BJ (cell line): ENCODE measurements at regions of chr1 and their contacts with region 1.

Region 1: GRCh38 chr1:110460253-110461220 is 9.6 kb downstream of the PROK1 start:
- DNase-seq: peak; percentile 23
- H3K4me3 ChIP-seq: no peak overlapping the region
- H3K27me3 ChIP-seq: no peaks in the 10 kb centered on the region; the same call in 1 of the 2 replicates
- CTCF ChIP-seq: peak; percentile 92

Region 2: DNA sequence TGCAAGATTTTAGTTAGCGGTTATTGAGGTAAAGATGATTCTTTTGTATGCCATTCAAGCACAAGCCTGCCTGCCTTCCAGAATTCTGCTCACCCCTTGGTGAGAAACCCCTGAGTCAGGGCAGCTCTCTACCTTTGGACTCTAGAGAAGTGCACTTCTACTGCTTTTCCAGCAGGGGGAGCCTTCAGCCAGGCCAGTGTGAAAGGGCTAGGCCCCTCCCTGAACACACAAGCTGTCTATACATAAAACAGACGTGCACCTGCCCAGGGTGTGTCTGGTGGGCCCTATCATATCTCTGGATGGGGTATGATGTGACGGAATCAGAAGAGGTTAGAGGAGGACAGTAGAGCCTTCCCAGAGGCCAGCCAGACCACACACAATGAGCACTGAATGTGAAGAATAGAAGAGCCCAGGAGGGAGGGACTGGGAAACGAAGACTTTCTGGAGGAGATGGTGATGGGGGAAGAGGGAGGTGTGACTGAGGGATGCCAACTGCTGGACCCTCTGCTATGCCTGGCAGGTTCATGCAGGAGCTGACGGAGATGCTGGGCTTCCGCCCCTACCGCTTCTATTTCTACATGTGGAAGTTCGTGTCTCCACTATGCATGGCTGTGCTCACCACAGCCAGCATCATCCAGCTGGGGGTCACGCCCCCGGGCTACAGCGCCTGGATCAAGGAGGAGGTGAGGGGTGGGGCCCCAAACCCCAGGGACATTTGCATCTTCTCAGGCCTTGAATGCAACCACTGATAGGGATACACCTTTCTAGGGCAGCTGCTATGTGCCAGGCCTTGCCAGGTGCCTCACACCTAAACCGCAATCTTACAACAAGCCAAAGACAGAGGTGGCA is 263.4 kb before region 1 on chr1:
- CTCF ChIA-PET with region 1: interaction called, 331 read pairs
- POLR2A ChIA-PET with region 1: no interaction called
- DNase-seq: no peak
- H3K4me3 ChIP-seq: no peak overlapping the region
- H3K27me3 ChIP-seq: no peaks in the 10 kb centered on the region
- CTCF ChIP-seq: peak; percentile 98

Region 3: GRCh38 chr1:110319332-110320152 is 141.0 kb before region 1 on chr1:
- CTCF ChIA-PET with region 1: interaction called, 21 read pairs
- POLR2A ChIA-PET with region 1: no interaction called
- DNase-seq: no peak
- H3K4me3 ChIP-seq: no peak overlapping the region
- H3K27me3 ChIP-seq: no peaks in the 10 kb centered on the region
- CTCF ChIP-seq: no peak

Region 4: DNA sequence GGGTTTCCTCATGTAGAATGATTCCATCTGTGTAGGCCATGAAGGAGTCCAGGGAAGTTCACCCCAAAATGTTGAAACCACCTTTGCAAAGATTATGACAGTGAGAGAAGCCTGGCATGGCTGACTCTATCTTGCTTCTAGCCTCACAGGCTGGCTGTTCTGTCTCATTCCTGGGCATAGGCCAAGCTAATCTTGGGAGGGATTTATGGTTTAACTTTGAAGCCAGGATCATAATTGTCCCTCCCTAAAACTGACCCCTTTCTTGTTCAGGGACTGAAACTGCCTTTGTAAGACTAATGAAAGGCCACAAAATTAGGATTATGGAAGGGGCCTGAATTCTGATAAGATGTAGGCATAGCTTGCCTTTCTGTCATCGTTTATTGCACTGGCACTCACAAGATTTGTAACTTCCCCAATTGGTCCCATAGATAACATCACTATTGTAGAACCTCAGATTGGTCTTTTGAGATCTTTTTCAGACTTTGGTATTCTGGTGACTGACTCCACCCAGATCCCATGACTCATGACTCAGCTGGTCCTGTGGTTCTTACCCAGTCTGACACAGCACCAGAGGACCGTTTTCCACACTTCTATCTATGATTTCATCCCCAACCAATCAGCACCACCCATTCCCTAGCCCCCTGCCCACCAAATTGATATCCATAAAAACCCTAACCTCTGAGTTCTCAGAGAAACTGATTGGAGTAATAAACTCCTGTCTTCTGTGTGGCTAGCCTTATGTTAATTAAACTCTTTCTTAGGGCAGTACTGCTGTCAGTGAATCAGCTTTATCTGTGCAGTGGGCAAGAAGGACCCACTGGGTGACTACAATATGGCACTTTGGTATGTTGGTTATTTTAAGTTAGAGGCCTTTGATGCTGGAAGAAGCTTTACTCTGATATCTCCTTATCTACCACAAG is 39.4 kb before region 1 on chr1:
- CTCF ChIA-PET with region 1: interaction called, 296 read pairs
- POLR2A ChIA-PET with region 1: no interaction called
- DNase-seq: no peak
- H3K4me3 ChIP-seq: no peak overlapping the region
- H3K27me3 ChIP-seq: peaks cover 4% of the 10 kb centered on the region
- CTCF ChIP-seq: no peak

Region 5: DNA sequence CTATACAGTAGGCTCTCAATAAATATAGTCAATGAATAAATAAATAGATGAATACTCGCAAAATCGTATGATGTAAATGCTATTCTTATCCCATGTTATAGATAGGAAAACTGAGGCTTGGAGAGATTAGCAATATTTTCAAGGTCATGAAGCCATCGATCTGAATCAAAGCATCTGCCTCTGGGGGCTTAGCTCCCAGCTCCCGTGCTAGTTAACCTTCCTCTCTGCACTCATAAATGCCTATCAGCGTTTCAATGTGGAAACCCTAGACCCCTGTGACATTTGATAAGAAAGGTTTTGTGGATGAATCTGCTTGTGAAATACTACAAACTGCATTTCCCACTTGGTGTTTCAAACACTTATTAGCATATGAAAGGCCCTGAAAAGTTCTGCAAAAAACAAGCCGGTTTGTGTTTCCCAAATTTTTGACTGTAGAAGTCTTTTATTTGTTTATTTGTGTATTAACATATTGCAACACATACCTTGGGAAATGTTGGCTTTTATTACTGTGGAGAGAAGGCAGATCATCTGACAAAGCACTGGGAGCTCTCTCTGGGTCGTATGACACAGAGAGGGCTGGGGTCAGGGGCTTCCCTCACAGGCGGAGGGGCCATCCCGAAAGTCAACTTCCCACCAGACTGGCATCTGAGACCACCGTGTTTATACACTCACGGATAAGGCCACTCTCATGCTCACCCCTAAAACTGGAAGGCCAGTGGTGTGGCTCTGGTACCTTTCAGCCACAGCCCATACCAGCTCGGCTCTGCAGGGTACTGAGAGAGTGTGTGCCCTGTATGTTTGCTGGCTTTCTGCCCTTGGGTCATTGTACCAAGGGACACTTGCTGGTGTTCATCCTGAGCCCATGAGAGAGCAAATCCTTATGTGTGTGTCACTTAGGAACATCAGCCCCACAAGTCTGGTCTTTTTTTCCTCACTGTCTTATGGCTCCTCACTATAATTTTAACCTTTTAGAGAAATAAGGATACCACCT is 10.6 kb before region 1 on chr1:
- CTCF ChIA-PET with region 1: interaction called, 17 read pairs
- POLR2A ChIA-PET with region 1: no interaction called
- DNase-seq: no peak
- H3K4me3 ChIP-seq: no peak overlapping the region
- H3K27me3 ChIP-seq: peaks cover 40% of the 10 kb centered on the region
- CTCF ChIP-seq: no peak

Region 6: GRCh38 chr1:110495926-110496600 is 35.5 kb after region 1 on chr1:
- CTCF ChIA-PET with region 1: interaction called, 144 read pairs
- POLR2A ChIA-PET with region 1: no interaction called
- DNase-seq: peak; percentile 19
- H3K4me3 ChIP-seq: no peak overlapping the region
- H3K27me3 ChIP-seq: peaks cover 10% of the 10 kb centered on the region
- CTCF ChIP-seq: peak; percentile 95